ENCODE measurements at regions of chr10 and their contacts with region 1.

Region 1: GRCh38 chr10:125144693-125145623 is 15.4 kb downstream of the CTBP2 start:
- DNase-seq: peak; percentile 53
- ATAC-seq: peak; percentile 57 to 59

Region 2: DNA sequence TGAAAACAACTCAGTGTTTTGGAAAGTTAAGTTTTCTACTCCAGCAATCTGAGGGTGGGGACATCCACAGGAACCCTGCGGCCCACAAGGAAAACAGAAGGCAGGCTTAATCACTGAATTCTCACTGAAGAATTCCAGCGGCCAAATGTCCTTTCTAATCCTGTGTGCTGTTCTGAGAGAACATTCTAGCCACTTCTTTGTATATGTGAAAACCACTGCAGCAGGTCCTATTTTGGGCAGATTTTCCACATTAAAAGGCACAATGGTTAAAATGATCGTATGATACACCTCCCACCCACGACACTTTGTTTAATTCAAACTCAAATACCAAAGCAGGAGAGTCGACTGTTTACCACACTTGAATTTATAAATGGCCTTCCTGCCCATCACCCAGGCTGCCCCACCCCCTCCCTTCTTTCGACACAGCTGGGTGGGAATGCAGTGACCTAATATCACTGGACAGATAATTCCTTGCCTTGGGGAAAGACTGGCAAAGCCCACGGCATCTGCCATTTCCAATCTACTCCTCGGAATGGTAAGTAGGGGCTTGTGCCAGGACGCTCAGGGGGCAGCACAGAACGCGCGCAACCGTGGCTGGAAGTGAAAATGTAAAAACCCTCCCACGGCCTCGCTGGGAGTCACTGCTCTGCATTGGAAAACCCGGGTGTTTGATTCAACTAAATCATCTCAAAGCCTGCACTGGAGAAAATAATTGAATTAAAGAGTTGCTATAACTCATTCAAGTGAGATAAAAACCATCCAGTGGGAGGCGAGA is 51.6 kb before region 1 on chr10:
- intact Hi-C with region 1: loop called (anchors 5 to 10 kb)
- DNase-seq: peak; percentile 76
- ATAC-seq: peak; percentile 73 to 80